ENCODE measurements at regions of chr12 and their contacts with region 1.

Region 1: DNA sequence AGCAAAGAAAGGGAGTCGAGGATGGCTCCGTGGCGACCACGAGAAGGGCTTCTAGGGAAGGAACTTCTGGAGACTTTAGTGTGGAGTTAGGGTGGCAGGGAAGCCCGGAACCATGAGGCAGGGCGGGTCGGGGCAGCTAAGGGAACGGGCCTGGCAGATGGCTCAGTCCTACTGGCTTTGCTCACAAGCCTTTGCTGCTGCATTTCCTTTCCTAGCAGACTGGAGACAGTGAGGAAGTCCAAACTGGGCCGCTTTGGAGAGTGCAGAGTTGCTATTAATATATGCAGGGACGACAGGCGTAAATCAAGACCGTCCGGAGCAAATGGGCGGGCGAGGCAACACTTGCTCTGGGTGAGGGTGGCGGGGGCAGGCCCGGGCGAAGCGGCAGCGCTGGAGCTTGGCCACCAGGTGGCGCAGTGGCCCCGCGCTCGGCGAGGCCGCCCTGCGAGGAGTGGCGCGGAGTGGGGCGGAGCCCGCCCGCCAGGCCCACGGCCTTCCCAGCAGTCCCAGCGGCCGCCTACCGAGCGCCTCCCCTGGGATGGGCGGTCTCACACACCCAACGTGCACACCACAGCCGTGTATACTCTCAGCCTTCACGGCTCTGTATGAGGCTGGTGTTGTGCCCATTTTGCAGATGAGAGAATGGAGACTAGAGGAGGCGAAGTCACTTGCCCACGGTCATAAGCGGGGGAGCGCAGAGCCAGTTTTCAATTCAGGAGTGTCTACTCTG is 24.4 kb upstream of the LRTM2 start:
- DNase-seq: peak; percentile 87 to 98 (median 94)
- ATAC-seq: peak; percentile 95
- H3K4me3 ChIP-seq: peak overlapping the region; percentile 86
- H3K4me3 Mint-ChIP-seq: peak overlapping the region; percentile 95
- H3K27ac ChIP-seq: peak overlapping the region; percentile 61 to 78
- H3K27ac Mint-ChIP-seq: peak overlapping the region; percentile 93
- H3K4me1 ChIP-seq: peaks cover 32% of the 10 kb centered on the region
- H3K4me1 Mint-ChIP-seq: peaks cover 20% of the 10 kb centered on the region
- H3K27me3 ChIP-seq: no peaks in the 10 kb centered on the region
- H3K27me3 Mint-ChIP-seq: no peaks in the 10 kb centered on the region
- CTCF ChIP-seq: peak; percentile 75

Region 2: DNA sequence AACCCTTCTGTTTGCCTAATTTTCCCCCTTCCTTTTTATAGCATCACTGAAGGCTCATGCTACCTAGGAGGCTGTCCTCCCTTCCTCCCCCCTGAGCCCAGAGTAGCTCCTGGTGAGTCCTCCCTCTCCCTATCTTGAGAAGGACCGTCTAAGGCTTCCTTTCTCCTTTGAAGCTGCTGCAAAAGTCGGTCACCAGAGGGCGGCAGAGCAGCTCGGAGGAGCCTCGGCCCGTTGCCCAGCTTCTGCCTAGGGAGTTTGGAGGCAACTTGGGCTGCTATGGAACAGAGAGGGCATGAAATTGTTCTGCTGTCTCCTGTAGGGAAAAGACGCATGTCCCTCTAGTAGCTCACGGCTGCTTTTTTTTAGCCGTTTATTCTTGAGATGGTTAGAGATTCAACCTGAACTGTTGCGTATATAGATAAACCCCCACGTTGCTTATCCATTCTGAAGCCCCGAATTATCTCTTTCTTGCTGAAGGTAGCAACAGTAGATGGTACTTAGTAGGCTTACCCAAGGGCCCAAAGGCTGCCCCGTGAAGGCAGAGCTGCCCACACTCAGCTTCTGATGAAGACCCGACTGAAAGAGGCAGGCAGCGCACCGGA is 161.3 kb before region 1 on chr12:
- CTCF ChIA-PET with region 1: interaction called, 14 read pairs
- POLR2A ChIA-PET with region 1: interaction called, 7 read pairs
- intact Hi-C with region 1: loop called in 1 of 2 experiments (anchors 1 kb)
- DNase-seq: peak; percentile 40 to 75 (median 54)
- ATAC-seq: peak; percentile 68
- H3K4me3 ChIP-seq: no peak overlapping the region
- H3K4me3 Mint-ChIP-seq: no peak overlapping the region
- H3K27ac ChIP-seq: no peak overlapping the region
- H3K27ac Mint-ChIP-seq: no peak overlapping the region
- H3K4me1 ChIP-seq: peaks cover 21% of the 10 kb centered on the region
- H3K4me1 Mint-ChIP-seq: peaks cover 20% of the 10 kb centered on the region
- H3K27me3 ChIP-seq: peaks cover 34 to 43% of the 10 kb centered on the region in 2 experiments
- H3K27me3 Mint-ChIP-seq: peaks cover 54% of the 10 kb centered on the region
- CTCF ChIP-seq: peak; percentile 61

Region 3: DNA sequence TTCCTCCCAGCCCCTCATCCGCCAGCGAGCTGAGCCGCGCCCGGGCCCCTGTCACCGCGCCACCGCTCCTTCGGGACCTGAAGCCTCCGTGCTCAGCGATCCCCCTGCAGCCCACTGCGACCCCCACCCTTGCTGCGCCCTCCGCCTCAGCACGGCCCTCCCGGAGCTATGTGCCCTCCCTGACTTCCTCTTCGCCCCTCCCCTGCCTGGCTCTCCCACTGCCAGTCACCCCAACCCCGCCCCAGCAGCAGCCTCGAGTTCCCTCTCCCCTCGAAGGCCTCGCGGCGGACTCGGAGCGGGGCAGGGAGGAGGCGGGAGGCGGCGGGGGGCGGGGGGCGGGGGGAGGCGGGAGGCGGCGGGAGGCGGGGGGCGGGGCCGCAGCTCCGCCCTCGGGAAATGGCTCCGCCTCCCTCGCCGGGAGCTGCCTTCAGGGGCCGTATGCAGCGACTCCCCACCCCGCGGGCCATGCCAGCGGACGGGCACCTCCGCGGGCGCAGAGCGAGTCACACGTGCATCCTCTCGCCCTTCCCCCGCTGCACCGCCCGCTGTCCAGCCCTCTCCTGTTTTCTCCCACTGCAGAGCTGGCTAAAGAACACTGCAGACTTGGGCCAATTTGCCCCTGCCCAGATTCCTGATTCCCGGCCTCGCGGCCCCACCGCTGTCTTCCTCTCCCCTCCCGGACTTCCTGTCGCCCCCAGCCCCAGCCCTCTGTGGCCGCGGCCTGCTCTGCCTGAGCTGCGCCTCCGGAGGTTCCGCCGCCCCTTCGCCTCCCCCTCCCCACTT is 134.2 kb before region 1 on chr12:
- CTCF ChIA-PET with region 1: interaction called, 154 read pairs
- POLR2A ChIA-PET with region 1: interaction called, 11 read pairs
- intact Hi-C with region 1: loop called in 1 of 2 experiments (anchors 2 kb)
- DNase-seq: peak; percentile 54 to 96 (median 75)
- ATAC-seq: peak; percentile 77
- H3K4me3 ChIP-seq: peak overlapping the region; percentile 56
- H3K4me3 Mint-ChIP-seq: peak overlapping the region; percentile 79
- H3K27ac ChIP-seq: peak overlapping the region in 1 of 2 donors; percentile 29
- H3K27ac Mint-ChIP-seq: peak overlapping the region; percentile 73
- H3K4me1 ChIP-seq: peaks cover 21% of the 10 kb centered on the region
- H3K4me1 Mint-ChIP-seq: peaks cover 42% of the 10 kb centered on the region
- H3K27me3 ChIP-seq: no peaks in the 10 kb centered on the region
- H3K27me3 Mint-ChIP-seq: no peaks in the 10 kb centered on the region
- CTCF ChIP-seq: no peak

Region 4: DNA sequence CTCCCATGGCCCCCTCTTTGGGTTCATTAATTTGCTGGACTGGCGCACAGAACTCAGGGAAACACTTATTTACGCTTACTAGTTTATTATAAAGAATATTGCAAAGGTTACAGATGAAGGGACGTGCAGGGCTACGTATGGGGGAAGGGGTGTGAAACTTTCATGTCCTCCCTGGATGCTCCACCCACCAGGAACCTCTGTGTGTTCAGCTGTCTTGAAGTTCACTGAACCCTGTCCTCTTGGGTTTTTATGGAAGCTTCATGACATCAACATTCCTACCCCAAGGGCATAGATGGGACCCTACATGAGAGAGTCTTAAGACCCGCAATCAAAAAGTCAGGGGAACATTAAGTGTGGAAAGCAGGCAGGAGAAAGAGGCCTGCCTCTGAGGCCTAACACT is 46.9 kb before region 1 on chr12:
- CTCF ChIA-PET with region 1: no interaction called
- POLR2A ChIA-PET with region 1: no interaction called
- intact Hi-C with region 1: no loop called
- DNase-seq: no peak
- ATAC-seq: no peak
- H3K4me3 ChIP-seq: no peak overlapping the region
- H3K4me3 Mint-ChIP-seq: no peak overlapping the region
- H3K27ac ChIP-seq: no peak overlapping the region
- H3K27ac Mint-ChIP-seq: no peak overlapping the region
- H3K4me1 ChIP-seq: no peaks in the 10 kb centered on the region
- H3K4me1 Mint-ChIP-seq: peaks cover 20% of the 10 kb centered on the region
- H3K27me3 ChIP-seq: no peaks in the 10 kb centered on the region
- H3K27me3 Mint-ChIP-seq: no peaks in the 10 kb centered on the region
- CTCF ChIP-seq: no peak

Region 5: DNA sequence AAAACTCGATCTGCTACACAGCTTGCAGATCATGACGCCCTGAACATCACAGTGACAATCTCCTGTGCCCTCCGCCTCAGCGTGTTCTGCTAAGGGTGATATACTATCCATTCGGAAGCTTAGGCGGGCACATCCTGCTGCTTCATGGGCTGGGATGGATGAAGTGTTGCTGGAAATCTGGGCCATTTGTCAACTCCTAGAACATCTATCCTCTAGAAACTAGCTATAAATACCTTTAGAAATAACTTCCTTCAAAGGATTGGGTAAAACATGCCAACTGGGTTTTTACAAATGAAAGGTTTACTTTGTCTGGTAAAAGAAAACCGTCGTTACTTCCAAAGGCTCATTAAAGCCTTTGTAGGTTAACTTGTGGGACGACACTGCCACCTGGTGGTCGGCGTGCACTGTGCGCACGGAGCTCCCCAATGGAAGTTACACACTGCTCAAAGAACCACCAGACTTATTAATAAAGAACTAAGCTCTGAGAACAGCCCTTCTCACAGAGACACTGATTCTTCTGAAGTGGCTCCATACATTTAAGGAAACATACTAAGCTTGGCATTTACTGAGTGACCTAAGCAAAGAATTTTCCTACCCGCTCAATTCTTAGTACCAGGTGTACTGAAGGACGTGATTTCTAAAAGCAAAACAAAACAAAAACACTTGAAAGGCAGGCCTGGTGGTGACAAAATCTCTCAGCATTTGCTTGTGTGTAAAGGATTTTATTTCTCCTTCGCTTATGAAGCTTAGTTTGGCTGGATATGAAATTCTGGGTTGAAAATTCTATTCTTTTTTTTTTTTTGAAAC is 144.1 kb after region 1 on chr12:
- CTCF ChIA-PET with region 1: interaction called, 122 read pairs
- POLR2A ChIA-PET with region 1: interaction called, 50 read pairs
- intact Hi-C with region 1: loop called (anchors 1 kb)
- DNase-seq: peak; percentile 83 to 97 (median 91)
- ATAC-seq: peak; percentile 100
- H3K4me3 ChIP-seq: no peak overlapping the region
- H3K4me3 Mint-ChIP-seq: no peak overlapping the region
- H3K27ac ChIP-seq: peak overlapping the region in 1 of 2 donors; percentile 38
- H3K27ac Mint-ChIP-seq: no peak overlapping the region
- H3K4me1 ChIP-seq: peaks cover 6% of the 10 kb centered on the region
- H3K4me1 Mint-ChIP-seq: peaks cover 6% of the 10 kb centered on the region
- H3K27me3 ChIP-seq: no peaks in the 10 kb centered on the region
- H3K27me3 Mint-ChIP-seq: no peaks in the 10 kb centered on the region
- CTCF ChIP-seq: peak; percentile 96

Region 6: DNA sequence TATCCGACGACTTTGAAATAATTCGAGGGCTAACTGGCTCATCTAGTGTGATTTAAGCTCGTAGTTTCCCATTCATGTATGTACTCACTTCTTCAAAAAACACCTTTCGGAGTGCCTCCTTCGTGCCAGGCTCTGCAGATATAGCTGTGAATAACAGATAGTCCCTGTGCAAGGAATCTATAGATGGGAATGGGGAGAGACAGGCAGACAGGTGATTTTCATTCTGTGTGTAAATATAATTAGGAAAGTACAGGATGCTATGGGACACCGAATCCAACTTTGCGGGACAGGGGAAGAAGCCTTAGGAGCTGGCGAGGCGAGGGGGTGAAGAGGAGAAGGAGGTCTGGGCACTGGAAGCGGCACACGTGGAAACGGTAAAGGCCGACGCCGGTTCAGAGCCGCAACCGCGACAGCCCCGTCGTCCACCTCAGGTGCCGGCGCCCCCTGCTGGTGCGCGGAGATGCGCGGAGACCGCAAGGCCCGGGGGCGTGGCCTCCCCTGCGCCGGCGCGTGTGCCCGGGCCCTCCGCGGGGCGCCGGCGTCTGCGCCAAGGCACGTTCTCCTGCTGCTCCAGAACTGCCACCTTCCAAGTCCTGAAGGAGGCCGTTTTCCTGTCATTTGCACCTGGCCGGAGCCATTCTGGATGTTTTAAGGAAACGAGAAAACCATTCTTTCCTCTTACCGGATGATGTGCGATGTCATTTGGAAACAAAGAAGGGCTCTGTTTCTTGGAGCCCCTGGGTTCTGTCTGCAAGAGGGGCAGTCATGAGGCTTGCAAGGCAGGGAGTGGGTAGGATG is 238.9 kb after region 1 on chr12:
- CTCF ChIA-PET with region 1: interaction called, 13 read pairs
- POLR2A ChIA-PET with region 1: interaction called, 4 read pairs
- intact Hi-C with region 1: loop called (anchors 2 to 10 kb)
- DNase-seq: peak; percentile 71 to 94 (median 83)
- ATAC-seq: peak; percentile 99
- H3K4me3 ChIP-seq: peak overlapping the region; percentile 47
- H3K4me3 Mint-ChIP-seq: peak overlapping the region; percentile 73
- H3K27ac ChIP-seq: no peak overlapping the region
- H3K27ac Mint-ChIP-seq: no peak overlapping the region
- H3K4me1 ChIP-seq: peaks cover 11% of the 10 kb centered on the region
- H3K4me1 Mint-ChIP-seq: peaks cover 16% of the 10 kb centered on the region
- H3K27me3 ChIP-seq: peaks cover 3 to 26% of the 10 kb centered on the region in 2 experiments
- H3K27me3 Mint-ChIP-seq: peaks cover 31% of the 10 kb centered on the region
- CTCF ChIP-seq: peak; percentile 91

Region 7: DNA sequence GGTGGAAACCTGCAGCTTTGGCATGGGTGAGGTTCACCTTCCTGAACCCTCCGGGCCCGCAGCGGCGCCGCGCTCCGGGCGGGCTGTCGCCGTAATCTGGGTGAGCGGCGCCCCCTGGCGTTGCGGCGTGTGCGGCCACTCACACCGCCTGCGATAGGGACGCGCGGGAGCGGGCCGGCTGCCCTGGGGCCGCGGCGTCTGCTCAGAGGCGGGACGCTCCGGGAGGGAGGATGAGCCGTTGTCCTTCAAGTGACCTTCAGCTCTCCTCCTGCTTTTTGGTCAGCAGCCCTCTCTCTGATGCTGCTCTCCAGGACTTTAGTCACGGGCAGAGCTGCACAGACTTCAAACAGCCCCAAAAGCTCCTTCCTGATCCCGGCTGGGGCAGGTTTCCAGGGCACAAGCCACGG is 787.1 kb after region 1 on chr12:
- CTCF ChIA-PET with region 1: no interaction called
- POLR2A ChIA-PET with region 1: no interaction called
- intact Hi-C with region 1: loop called (anchors 10 kb)
- DNase-seq: peak in 12 of 14 experiments; percentile 5 to 67 (median 16)
- ATAC-seq: peak; percentile 49
- H3K4me3 ChIP-seq: no peak overlapping the region
- H3K4me3 Mint-ChIP-seq: no peak overlapping the region
- H3K27ac ChIP-seq: no peak overlapping the region
- H3K27ac Mint-ChIP-seq: no peak overlapping the region
- H3K4me1 ChIP-seq: peaks cover 7% of the 10 kb centered on the region
- H3K4me1 Mint-ChIP-seq: peaks cover 4% of the 10 kb centered on the region
- H3K27me3 ChIP-seq: peaks cover 24 to 28% of the 10 kb centered on the region in 2 experiments
- H3K27me3 Mint-ChIP-seq: peaks cover 67% of the 10 kb centered on the region
- CTCF ChIP-seq: peak; percentile 68

Region 8: GRCh38 chr12:2794736-2795289 is 998.9 kb after region 1 on chr12 and contains the start of gene FKBP4:
- CTCF ChIA-PET with region 1: no interaction called
- POLR2A ChIA-PET with region 1: no interaction called
- intact Hi-C with region 1: loop called in 1 of 2 experiments (anchors 5 kb)
- DNase-seq: peak; percentile 78 to 96 (median 86)
- ATAC-seq: peak; percentile 89
- H3K4me3 ChIP-seq: peak within 1 kb of the TSS; percentile 71
- H3K4me3 Mint-ChIP-seq: peak within 1 kb of the TSS; percentile 96
- H3K27ac ChIP-seq: peak within 1 kb of the TSS; percentile 19 to 64
- H3K27ac Mint-ChIP-seq: peak within 1 kb of the TSS; percentile 83
- H3K4me1 ChIP-seq: peaks cover 26% of the 10 kb centered on the region
- H3K4me1 Mint-ChIP-seq: peaks cover 34% of the 10 kb centered on the region
- H3K27me3 ChIP-seq: no peaks in the 10 kb centered on the region
- H3K27me3 Mint-ChIP-seq: no peaks in the 10 kb centered on the region
- CTCF ChIP-seq: no peak
- total RNA-seq, gene FKBP4: 35.7 to 40.3 TPM

Measured in CD4-positive, alpha-beta T cell (primary cell).